ENCODE measurements at regions of chr10 and their contacts with region 1.

Region 1: DNA sequence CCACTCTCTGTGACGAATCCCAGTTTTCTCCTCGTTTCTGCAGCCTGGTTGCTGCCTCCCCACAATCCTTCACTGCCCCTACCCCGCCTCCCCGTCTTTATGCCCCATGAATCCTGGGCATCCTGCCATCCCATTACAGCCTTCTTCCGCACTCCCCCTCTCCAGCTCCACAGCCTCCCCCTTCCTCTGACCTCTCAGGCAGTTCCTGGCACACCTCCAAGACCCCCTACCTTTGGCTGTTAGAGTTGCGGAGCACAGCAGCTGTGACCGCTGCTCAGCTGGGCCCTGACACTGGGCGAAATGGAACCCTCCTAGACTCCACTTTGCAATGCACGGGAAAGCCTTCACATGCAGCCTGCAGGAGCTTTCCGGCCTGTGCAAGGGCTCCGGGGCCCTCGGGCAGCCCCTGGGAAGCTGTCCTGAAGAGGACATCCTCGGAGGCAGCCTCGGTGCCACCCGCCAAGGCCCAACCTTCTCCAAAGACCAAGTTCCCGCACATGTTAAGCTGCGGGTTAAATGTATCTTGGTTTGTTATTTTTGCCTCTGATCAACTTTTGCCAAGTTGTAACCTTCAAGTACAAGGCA is 400.7 kb upstream of the MKI67 start:
- DNase-seq: no peak
- ATAC-seq: no peak
- H3K4me3 ChIP-seq: no peak overlapping the region
- H3K27ac ChIP-seq: no peak overlapping the region
- H3K4me1 ChIP-seq: no peaks in the 10 kb centered on the region
- H3K27me3 ChIP-seq: peaks cover 2% of the 10 kb centered on the region
- CTCF ChIP-seq: no peak

Region 2: DNA sequence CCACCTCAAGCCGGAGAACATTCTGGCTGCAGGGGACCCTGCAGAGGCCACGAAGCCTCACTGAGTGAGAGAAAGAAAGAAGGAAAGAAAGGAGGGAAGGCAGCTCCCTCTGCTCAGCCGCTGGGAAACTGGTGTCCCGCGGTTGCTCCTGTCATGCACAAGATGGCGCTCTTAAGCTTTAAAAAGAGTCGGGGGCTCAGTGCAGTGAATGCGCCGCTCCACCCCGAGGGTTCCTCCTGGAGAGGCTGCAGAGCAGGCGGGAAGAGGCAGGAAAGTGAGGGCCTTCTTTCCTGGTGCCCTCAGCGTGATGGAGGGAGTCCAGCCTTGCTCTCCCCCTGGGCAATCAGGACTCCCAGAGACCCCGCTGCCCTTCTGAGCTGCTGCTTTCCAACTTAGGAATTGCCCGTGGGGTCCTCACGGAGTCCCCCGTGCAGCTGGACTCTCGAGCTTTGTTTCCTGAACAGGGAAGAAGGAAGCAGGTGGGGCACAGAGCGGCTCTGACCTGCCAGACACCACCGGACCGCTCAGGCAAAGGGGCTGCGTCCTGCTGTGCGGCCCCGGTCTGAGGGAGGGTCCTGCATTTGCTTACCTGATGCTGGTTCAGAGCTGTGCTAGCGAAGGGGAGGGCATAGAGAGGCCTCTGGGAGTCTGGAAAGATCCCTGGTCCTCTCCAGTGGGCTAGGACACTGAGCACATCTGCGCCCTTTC is 258.7 kb before region 1 on chr10:
- CTCF ChIA-PET with region 1: no interaction called
- POLR2A ChIA-PET with region 1: no interaction called
- in situ Hi-C with region 1: no loop called
- intact Hi-C with region 1: loop called (anchors 5 kb)
- DNase-seq: no peak
- ATAC-seq: peak; percentile 84
- H3K4me3 ChIP-seq: no peak overlapping the region
- H3K27ac ChIP-seq: no peak overlapping the region
- H3K4me1 ChIP-seq: no peaks in the 10 kb centered on the region
- H3K27me3 ChIP-seq: peaks cover 15% of the 10 kb centered on the region
- CTCF ChIP-seq: peak; percentile 86